Sigmoid colon (tissue), 7 donors: ENCODE measurements at regions of chr11 and their contacts with region 1.

Region 1: GRCh38 chr11:124673333-124674167 is at the starts of genes SIAE and SPA17:
- DNase-seq: peak; percentile 97
- H3K4me3 ChIP-seq: peak within 1 kb of the TSS; percentile 60 to 82 (median 72)
- H3K27ac ChIP-seq: peak within 1 kb of the TSS; percentile 79 to 87 (median 86)
- H3K4me1 ChIP-seq: peaks cover 0 to 17% (median 12%) of the 10 kb centered on the region in 4 donors
- H3K27me3 ChIP-seq: no peaks in the 10 kb centered on the region
- CTCF ChIP-seq: no peak
- EP300 ChIP-seq: peak in 3 of 4 donors; percentile 26 to 56 (median 52)
- POLR2A ChIP-seq: peak in 1 of 2 donors; percentile 57
- total RNA-seq, gene SIAE: 2.5 to 7.2 (median 4.3) TPM
- total RNA-seq, gene SPA17: 2.3 to 7.1 (median 5.2) TPM

Region 2: DNA sequence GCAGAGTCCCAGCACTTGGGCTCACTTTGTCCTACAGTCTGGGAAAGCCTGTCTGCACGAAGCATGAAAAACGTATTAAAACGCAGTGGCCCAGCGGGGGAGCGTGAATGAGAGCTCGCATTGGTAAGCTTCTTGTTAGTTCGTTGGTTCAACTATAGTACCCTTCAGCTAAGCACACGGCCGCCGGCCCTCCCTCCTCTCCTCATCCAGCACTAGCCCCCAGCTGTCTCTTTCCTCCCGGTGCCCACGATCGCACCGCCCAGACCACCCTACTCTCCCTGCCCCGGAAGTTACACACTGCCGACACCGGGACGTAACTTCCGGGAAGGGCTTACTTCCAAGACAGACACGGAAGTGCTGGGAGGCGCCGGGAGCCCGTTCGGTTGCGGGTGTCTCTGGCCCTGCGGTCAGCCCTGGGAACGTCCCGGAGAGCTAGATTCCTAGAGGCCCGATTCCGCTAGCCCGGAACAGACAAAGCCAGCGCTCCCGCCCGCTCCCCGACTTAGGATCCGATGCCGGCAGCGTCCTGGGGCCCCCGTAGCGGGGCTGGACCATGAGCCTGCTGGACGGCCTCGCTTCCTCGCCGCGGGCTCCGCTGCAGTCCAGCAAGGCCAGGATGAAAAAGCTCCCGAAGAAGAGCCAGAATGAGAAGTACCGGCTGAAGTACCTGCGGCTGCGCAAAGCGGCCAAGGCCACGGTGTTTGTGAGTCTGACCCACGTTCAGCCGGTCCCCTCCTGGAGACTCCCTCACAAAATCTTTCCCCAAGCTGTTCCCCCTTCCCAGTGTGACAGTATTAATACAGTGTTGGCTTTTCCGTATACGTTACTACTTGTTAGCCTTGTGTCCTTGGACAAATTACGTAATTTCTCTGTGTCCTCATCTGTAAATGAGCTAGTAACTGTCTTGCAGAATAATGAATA is 50.8 kb before region 1 on chr11 and contains the start of gene TBRG1:
- intact Hi-C with region 1: loop called (anchors 5 kb)
- DNase-seq: peak; percentile 94
- H3K4me3 ChIP-seq: peak within 1 kb of the TSS; percentile 77 to 98 (median 86)
- H3K27ac ChIP-seq: peak within 1 kb of the TSS; percentile 92 to 95 (median 94)
- H3K4me1 ChIP-seq: peaks cover 0 to 32% (median 19%) of the 10 kb centered on the region in 4 donors
- H3K27me3 ChIP-seq: no peaks in the 10 kb centered on the region
- CTCF ChIP-seq: no peak
- EP300 ChIP-seq: no peak
- POLR2A ChIP-seq: peak; percentile 88 to 89
- total RNA-seq, gene TBRG1: 26.0 to 41.0 (median 30.3) TPM

Region 3: DNA sequence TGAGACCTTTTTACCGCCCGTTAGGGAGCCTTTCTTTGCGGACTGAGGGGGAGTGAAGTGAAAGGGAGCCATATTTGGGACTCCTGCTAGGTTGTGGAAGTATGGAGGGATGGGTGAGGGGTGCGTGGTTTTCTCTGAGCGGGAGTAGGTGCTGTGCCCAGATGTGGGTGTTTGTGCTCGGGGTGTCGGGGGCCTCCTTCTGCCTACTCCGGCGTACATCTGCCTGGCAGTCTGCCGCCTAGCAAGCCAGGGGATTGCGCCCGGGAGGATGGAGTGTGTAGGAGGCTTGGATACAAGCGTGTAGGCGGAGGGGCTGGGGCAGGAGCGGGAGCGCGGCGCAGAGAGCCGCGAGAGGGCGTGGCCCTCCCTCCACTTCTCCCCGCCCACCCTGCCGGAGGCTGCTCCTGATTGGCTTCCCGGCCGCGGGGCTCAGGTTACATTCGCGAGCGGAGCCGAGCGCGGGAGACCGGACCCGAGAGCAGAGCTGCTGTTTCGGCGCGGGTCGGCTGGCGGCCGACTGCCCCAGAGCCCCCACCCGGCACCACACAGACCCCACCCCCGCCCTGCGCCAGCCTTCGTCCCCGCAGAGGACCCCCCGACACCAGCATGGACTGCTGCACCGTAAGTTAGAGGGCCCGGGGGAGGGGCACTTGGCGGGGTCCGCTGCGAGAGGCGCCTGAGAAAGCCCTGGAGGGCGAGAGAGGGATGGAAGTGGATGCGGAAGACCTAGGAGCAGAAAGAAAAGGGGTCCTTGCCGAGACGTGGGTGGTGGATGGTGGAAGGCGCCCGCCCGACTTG is 66.1 kb after region 1 on chr11 and contains the start of gene NRGN:
- intact Hi-C with region 1: loop called (anchors 2 kb)
- DNase-seq: peak; percentile 94
- H3K4me3 ChIP-seq: peak within 1 kb of the TSS; percentile 31 to 59 (median 52)
- H3K27ac ChIP-seq: peak within 1 kb of the TSS in 1 of 4 donors; percentile 41
- H3K4me1 ChIP-seq: peaks cover 0 to 16% (median 15%) of the 10 kb centered on the region in 4 donors
- H3K27me3 ChIP-seq: peaks cover 13 to 62% (median 37%) of the 10 kb centered on the region in 3 donors
- CTCF ChIP-seq: no peak
- EP300 ChIP-seq: no peak
- POLR2A ChIP-seq: no peak
- total RNA-seq, gene NRGN: 0.95 to 1.3 (median 1.1) TPM in 3 of 4 donors, not detected in the other

Region 4: GRCh38 chr11:124758317-124759203 is 85.0 kb after region 1 on chr11:
- intact Hi-C with region 1: loop called (anchors 2 kb)
- DNase-seq: peak; percentile 82
- H3K4me3 ChIP-seq: peak overlapping the region in 3 of 4 donors; percentile 25 to 44 (median 41)
- H3K27ac ChIP-seq: peak overlapping the region; percentile 17 to 76 (median 52)
- H3K4me1 ChIP-seq: peaks cover 0 to 47% (median 44%) of the 10 kb centered on the region in 4 donors
- H3K27me3 ChIP-seq: peaks cover 47 to 96% (median 72%) of the 10 kb centered on the region in 3 donors
- CTCF ChIP-seq: peak; percentile 31 to 75 (median 64)
- EP300 ChIP-seq: no peak
- POLR2A ChIP-seq: no peak

Region 5: GRCh38 chr11:124837491-124837856 is 163.9 kb after region 1 on chr11:
- intact Hi-C with region 1: loop called (anchors 1 kb)
- DNase-seq: no peak
- H3K4me3 ChIP-seq: no peak overlapping the region
- H3K27ac ChIP-seq: peak overlapping the region in 1 of 4 donors; percentile 84
- H3K4me1 ChIP-seq: peaks cover 0 to 20% (median 17%) of the 10 kb centered on the region in 4 donors
- H3K27me3 ChIP-seq: peaks cover 24 to 50% (median 39%) of the 10 kb centered on the region in 3 donors
- CTCF ChIP-seq: no peak
- EP300 ChIP-seq: no peak
- POLR2A ChIP-seq: no peak

Region 6: DNA sequence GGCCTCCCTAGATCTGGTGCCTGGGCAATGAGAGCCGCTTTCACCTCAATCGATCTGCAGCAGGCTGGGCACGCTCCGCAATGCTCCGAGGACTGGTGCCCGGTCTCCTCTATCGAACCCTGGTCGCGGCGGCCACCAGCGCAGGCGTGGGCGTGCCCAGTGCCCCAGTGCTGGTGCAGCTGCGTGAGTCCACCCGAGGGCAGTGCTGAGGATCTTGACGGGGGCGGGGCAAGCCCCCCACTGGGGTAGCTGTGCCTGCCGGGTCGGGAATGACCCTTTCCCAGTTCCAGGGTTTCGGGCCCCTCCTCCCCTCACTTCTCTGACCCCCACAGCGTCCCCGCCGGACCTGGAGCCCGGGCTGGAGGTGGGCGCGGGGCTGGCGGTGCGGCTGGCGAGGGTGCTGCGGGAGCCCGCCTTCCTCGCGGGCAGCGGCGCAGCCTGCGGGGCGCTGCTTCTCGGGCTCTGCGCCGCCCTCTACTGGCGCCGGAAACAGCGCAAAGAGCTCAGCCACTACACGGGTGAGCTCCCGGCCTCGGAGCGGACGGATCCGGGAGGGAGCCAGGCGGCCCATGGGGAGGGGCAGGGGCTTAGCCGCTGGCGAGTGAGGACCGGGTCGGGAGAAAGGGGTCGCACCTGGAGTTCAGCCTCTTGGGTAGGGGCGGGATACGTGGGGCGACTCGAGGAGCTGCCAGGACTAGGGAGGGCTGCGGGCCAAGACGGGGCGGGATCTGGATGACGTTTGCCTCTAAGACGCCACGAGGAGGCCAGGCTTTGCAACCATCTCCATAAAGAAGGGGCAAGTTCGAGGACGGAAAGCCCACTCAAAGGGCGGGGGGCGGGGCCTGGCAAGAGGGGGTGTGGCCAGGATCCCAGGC is 202.6 kb after region 1 on chr11:
- intact Hi-C with region 1: loop called (anchors 10 kb)
- DNase-seq: peak; percentile 95
- H3K4me3 ChIP-seq: peak overlapping the region; percentile 47 to 66 (median 54)
- H3K27ac ChIP-seq: peak overlapping the region; percentile 88 to 92 (median 90)
- H3K4me1 ChIP-seq: peaks cover 0 to 21% (median 12%) of the 10 kb centered on the region in 4 donors
- H3K27me3 ChIP-seq: peaks cover 0 to 29% (median 21%) of the 10 kb centered on the region in 3 donors
- CTCF ChIP-seq: peak; percentile 44 to 71 (median 49)
- EP300 ChIP-seq: peak in 1 of 4 donors; percentile 28
- POLR2A ChIP-seq: no peak